Activated T-helper 1 cell treated with anti-CD3 and anti-CD28 coated beads, Interleukin-12 subunit alpha, Interleukin-12 subunit beta, Interleukin-2, Interleukin-4 antibody, amounts not matched to agents 30 ng/mL and 10 ng/mL and 1 ng/mL, durations not matched to agents 14 hours and 24 hours and 36 hours (primary cell): ENCODE measurements at regions of chr6 and their contacts with region 1.

Region 1: DNA sequence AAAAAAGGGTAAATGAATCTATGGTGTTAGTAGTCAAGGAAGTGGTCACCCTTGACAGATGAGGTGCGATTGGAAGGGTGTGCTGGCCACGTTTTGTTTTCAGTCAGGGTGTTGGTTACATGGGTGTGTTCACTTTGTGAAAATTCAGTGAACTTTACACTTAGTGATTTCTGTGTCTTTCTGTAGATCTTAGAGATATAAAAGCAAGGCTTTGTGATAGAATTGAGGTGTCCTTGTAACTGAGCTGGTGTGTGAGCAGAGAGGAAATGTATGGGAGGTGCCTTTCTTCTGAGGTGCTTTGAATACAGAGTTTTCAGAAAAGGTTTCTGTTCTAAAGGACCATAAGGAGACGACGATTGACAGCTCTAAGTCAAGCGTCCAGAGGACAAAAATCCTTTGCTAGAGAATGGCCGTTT is 90.5 kb downstream of the SAMD3 start:
- DNase-seq: peak; percentile 72
- H3K4me3 Mint-ChIP-seq: peak overlapping the region; percentile 36
- H3K27ac Mint-ChIP-seq: peak overlapping the region; percentile 84
- H3K4me1 Mint-ChIP-seq: peaks cover 83% of the 10 kb centered on the region
- H3K27me3 Mint-ChIP-seq: no peaks in the 10 kb centered on the region

Region 2: GRCh38 chr6:129490521-129491245 is 641.6 kb before region 1 on chr6:
- intact Hi-C with region 1: loop called (anchors 1 kb)
- DNase-seq: peak; percentile 69
- H3K4me3 Mint-ChIP-seq: peak overlapping the region; percentile 77
- H3K27ac Mint-ChIP-seq: peak overlapping the region; percentile 99
- H3K4me1 Mint-ChIP-seq: peaks cover 68% of the 10 kb centered on the region
- H3K27me3 Mint-ChIP-seq: no peaks in the 10 kb centered on the region

Region 3: GRCh38 chr6:130037207-130037811 is 95.0 kb before region 1 on chr6:
- intact Hi-C with region 1: loop called (anchors 1 kb)
- DNase-seq: no peak
- H3K4me3 Mint-ChIP-seq: no peak overlapping the region
- H3K27ac Mint-ChIP-seq: no peak overlapping the region
- H3K4me1 Mint-ChIP-seq: peaks cover 43% of the 10 kb centered on the region
- H3K27me3 Mint-ChIP-seq: peaks cover 2% of the 10 kb centered on the region

Region 4: DNA sequence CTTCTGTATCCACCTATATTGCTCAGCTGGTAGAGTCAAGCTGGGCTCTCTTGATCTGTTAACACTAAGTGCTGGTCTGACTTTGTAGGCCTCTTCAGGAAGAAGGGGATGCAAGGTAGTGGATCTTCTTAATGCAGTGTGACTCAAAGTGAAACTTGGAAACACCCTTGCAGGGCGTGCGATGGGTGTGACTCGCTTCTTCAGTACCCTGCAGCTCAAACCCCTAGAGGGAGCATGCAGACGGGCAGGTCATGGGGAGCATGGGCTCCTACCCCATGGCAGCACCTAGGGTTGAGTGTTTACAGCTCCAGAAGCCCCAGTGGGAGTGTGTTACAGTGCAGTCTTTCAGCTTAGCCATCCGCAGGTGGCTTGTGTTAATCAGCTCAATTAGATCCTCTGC is 91.2 kb after region 1 on chr6:
- intact Hi-C with region 1: loop called (anchors 1 kb)
- DNase-seq: peak; percentile 73
- H3K4me3 Mint-ChIP-seq: peak overlapping the region; percentile 6
- H3K27ac Mint-ChIP-seq: peak overlapping the region; percentile 72
- H3K4me1 Mint-ChIP-seq: peaks cover 43% of the 10 kb centered on the region
- H3K27me3 Mint-ChIP-seq: no peaks in the 10 kb centered on the region

Region 5: DNA sequence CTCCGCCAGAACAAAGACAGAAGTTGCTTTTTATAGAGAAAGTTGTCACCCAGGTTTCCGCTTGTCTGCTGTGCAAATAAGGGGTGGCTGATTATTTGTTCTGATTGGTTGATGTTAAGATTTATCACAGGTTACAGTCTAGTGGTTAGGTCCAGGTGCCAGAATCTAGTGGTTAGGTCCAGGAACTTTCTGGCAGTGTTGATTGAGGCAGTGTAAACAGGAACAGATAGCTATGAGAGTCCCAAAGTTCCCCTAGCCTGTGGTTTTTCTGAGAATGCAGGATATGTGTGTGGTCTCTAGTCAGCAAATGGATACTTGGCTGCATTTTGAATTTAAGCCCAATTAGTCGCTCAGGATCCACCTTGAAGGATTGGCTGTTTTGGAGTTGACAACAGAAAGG is 381.5 kb after region 1 on chr6:
- intact Hi-C with region 1: loop called (anchors 2 kb)
- DNase-seq: peak; percentile 82
- H3K4me3 Mint-ChIP-seq: peak overlapping the region; percentile 64
- H3K27ac Mint-ChIP-seq: peak overlapping the region; percentile 84
- H3K4me1 Mint-ChIP-seq: peaks cover 65% of the 10 kb centered on the region
- H3K27me3 Mint-ChIP-seq: no peaks in the 10 kb centered on the region

Region 6: GRCh38 chr6:131063028-131063763 is 930.9 kb after region 1 on chr6 and contains the start of gene EPB41L2:
- intact Hi-C with region 1: loop called (anchors 10 kb)
- DNase-seq: peak; percentile 76
- H3K4me3 Mint-ChIP-seq: peak within 1 kb of the TSS; percentile 81
- H3K27ac Mint-ChIP-seq: peak within 1 kb of the TSS; percentile 14
- H3K4me1 Mint-ChIP-seq: peaks cover 21% of the 10 kb centered on the region
- H3K27me3 Mint-ChIP-seq: peaks cover 15% of the 10 kb centered on the region
- total RNA-seq, gene EPB41L2: 17.7 and 18.7 TPM in 2 replicates